IMR-90 (cell line): ENCODE measurements at regions of chr2 and their contacts with region 1.

Region 1: GRCh38 chr2:235500761-235501672 is 7.2 kb downstream of the AGAP1 start:
- DNase-seq: peak; percentile 71
- ATAC-seq: peak; percentile 85
- H3K4me3 ChIP-seq: no peak overlapping the region
- H3K27ac ChIP-seq: no peak overlapping the region
- H3K4me1 ChIP-seq: peaks cover 20% of the 10 kb centered on the region
- H3K27me3 ChIP-seq: no peaks in the 10 kb centered on the region
- CTCF ChIP-seq: no peak
- POLR2A ChIP-seq: no peak
- RAD21 ChIP-seq: no peak

Region 2: DNA sequence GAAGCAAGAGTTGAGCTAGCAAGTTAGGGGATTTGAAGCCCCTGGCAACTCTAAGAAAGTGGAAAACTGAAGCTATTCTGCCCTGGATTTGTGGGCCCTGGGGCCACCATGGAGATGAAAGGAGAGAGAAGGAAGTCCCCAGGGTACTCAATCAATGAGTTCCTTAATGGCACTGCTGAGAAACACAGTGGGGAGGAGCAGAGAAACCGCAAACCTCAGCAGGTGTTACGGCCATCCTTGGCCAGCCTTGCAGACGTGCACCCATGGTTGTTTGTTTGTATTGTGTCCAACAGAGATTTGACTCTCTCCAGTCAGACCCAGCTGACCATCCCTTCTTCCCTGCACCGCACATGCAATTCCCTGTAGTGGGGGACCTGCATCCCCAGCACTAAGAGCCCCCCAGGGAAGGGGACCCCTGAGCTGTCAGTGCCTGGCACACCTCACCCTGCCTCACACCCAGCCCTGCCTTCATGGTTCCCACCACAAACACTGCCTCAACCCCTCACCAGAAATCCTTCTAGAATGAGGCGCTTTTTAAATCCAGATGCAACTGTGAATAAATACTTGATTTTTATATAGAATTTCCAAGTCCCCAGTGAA is 293.9 kb before region 1 on chr2:
- CTCF ChIA-PET with region 1: no interaction called
- POLR2A ChIA-PET with region 1: no interaction called
- dilution Hi-C with region 1: no loop called
- in situ Hi-C with region 1: no loop called
- intact Hi-C with region 1: no loop called
- DNase-seq: no peak
- ATAC-seq: no peak
- H3K4me3 ChIP-seq: no peak overlapping the region
- H3K27ac ChIP-seq: no peak overlapping the region
- H3K4me1 ChIP-seq: no peaks in the 10 kb centered on the region
- H3K27me3 ChIP-seq: peaks cover 34% of the 10 kb centered on the region
- CTCF ChIP-seq: no peak
- POLR2A ChIP-seq: no peak
- RAD21 ChIP-seq: no peak

Region 3: GRCh38 chr2:235564066-235564465 is 63.0 kb after region 1 on chr2:
- CTCF ChIA-PET with region 1: no interaction called
- POLR2A ChIA-PET with region 1: interaction called, 17 read pairs
- dilution Hi-C with region 1: no loop called
- in situ Hi-C with region 1: no loop called
- intact Hi-C with region 1: no loop called
- DNase-seq: no peak
- ATAC-seq: no peak
- H3K4me3 ChIP-seq: no peak overlapping the region
- H3K27ac ChIP-seq: no peak overlapping the region
- H3K4me1 ChIP-seq: peaks cover 7% of the 10 kb centered on the region
- H3K27me3 ChIP-seq: no peaks in the 10 kb centered on the region
- CTCF ChIP-seq: no peak
- POLR2A ChIP-seq: no peak
- RAD21 ChIP-seq: no peak

Region 4: GRCh38 chr2:235654103-235654813 is 153.2 kb after region 1 on chr2:
- CTCF ChIA-PET with region 1: no interaction called
- POLR2A ChIA-PET with region 1: no interaction called
- dilution Hi-C with region 1: no loop called
- in situ Hi-C with region 1: no loop called
- intact Hi-C with region 1: no loop called
- DNase-seq: peak; percentile 74
- ATAC-seq: peak; percentile 81
- H3K4me3 ChIP-seq: no peak overlapping the region
- H3K27ac ChIP-seq: no peak overlapping the region
- H3K4me1 ChIP-seq: peaks cover 8% of the 10 kb centered on the region
- H3K27me3 ChIP-seq: no peaks in the 10 kb centered on the region
- CTCF ChIP-seq: no peak
- POLR2A ChIP-seq: no peak
- RAD21 ChIP-seq: no peak